Activated B cell treated with CpG ODN at 0.5 μM for 24 hours (primary cell): ENCODE measurements at regions of chr13 and their contacts with region 1.

Region 1: DNA sequence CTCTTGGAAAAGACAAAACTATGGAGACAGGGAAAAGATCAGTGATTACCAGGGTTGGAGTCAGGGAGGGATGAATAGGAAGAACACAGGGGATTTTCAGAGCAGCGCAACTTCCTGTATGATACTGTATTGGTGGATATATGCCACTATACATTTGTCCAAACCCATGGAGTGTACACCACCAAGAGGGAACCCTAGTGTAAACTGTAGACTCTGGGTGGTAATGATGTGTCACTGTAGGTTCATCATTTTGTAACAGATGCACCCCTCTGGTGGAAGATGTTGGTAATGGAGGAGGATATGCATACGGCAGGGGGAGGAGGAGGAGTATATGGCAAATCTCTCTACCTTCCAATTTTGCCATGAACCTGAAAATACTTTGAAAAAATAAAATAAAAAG is 68.1 kb downstream of the UFM1 start:
- DNase-seq: no peak
- ATAC-seq: no peak
- H3K4me3 Mint-ChIP-seq: no peak overlapping the region
- H3K27ac Mint-ChIP-seq: no peak overlapping the region
- H3K4me1 Mint-ChIP-seq: peaks cover 6% of the 10 kb centered on the region
- H3K27me3 Mint-ChIP-seq: no peaks in the 10 kb centered on the region
- CTCF ChIP-seq: no peak

Region 2: GRCh38 chr13:38086000-38086399 is 331.7 kb before region 1 on chr13:
- CTCF ChIA-PET with region 1: no interaction called
- POLR2A ChIA-PET with region 1: no interaction called
- intact Hi-C with region 1: loop called (anchors 10 kb)
- DNase-seq: no peak
- ATAC-seq: no peak
- H3K4me3 Mint-ChIP-seq: no peak overlapping the region
- H3K27ac Mint-ChIP-seq: no peak overlapping the region
- H3K4me1 Mint-ChIP-seq: no peaks in the 10 kb centered on the region
- H3K27me3 Mint-ChIP-seq: no peaks in the 10 kb centered on the region
- CTCF ChIP-seq: no peak

Region 3: DNA sequence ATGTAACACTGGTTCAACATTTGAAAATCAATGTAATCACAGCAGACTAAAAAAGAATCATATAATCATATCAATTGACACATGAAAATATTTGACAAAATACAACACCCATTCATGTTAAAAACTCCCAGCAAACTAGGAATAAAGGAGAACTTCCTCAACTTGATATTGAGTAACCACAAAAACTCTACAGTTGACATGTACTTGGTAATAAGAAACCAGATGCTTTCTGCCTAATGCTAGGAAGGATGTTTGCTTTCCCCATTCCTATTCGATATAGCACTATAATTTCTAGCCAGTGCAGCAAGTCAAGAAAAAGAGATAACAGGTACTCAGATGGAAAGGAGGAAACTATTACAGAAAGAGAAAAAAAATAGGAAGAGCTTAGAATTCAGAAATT is 41.2 kb before region 1 on chr13:
- CTCF ChIA-PET with region 1: no interaction called
- POLR2A ChIA-PET with region 1: no interaction called
- intact Hi-C with region 1: no loop called
- DNase-seq: no peak
- ATAC-seq: no peak
- H3K4me3 Mint-ChIP-seq: no peak overlapping the region
- H3K27ac Mint-ChIP-seq: no peak overlapping the region
- H3K4me1 Mint-ChIP-seq: no peaks in the 10 kb centered on the region
- H3K27me3 Mint-ChIP-seq: peaks cover 19% of the 10 kb centered on the region
- CTCF ChIP-seq: no peak